ENCODE measurements at regions of chr11 and their contacts with region 1.

Region 1: GRCh38 chr11:134139873-134140331 is 71.0 kb downstream of the JAM3 start:
- DNase-seq: peak in 4 of 5 donors; percentile 60 to 87 (median 78)
- H3K4me3 ChIP-seq: peak overlapping the region in 1 of 3 donors; percentile 37
- H3K27ac ChIP-seq: no peak overlapping the region
- H3K4me1 ChIP-seq: peaks cover 0 to 3% (median 0%) of the 10 kb centered on the region in 3 donors
- H3K27me3 ChIP-seq: no peaks in the 10 kb centered on the region
- CTCF ChIP-seq: peak; percentile 83

Region 2: DNA sequence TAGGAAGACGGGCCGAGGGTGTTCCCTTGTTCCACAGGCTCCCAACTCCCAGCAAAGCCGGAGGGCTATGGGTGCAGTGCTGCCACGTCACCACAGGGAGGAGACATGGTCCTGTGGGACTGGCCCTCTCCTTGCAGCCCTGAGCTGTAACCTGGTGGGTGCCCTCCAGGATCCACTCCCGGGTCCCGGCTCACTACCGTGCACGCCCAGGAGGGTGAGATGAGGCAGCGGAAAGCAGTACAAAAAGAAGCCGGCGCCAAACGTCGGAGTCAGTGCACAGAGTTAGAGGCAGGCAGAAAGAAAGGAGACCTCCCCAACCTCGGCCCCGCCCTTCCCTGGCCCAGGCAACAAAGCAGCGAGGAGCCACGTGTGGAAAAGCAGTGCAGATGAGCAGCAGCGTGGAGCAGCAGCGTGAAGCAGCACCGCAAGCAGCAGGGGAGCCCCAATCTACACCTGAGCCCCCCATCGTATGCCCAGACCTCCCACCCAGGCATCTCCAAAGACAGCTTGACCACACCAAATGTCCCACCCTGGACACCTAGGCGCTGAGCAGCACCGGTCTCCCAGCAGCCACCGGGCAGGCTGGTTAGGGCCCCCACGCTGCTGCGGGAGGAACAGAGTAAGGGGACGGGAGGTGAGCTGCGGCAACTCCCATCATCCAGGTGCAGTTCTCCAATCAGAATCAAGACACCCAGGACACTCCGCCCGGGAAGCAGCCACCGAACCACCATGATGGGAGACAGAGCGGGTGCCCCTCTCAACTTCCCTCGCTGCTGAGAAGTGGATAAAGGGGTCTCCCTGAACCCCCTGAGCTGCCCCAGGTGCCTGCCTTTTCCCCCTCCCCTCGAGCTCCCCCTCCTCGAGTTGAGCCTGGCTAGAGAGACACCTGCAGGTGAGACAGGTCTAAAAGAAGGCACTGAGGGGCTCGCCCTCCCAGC is 211.9 kb before region 1 on chr11:
- intact Hi-C with region 1: loop called (anchors 10 kb)
- DNase-seq: peak in 4 of 5 donors; percentile 66 to 86 (median 76)
- H3K4me3 ChIP-seq: peak overlapping the region in 1 of 3 donors; percentile 32
- H3K27ac ChIP-seq: no peak overlapping the region
- H3K4me1 ChIP-seq: no peaks in the 10 kb centered on the region
- H3K27me3 ChIP-seq: no peaks in the 10 kb centered on the region
- CTCF ChIP-seq: peak; percentile 75

Region 3: DNA sequence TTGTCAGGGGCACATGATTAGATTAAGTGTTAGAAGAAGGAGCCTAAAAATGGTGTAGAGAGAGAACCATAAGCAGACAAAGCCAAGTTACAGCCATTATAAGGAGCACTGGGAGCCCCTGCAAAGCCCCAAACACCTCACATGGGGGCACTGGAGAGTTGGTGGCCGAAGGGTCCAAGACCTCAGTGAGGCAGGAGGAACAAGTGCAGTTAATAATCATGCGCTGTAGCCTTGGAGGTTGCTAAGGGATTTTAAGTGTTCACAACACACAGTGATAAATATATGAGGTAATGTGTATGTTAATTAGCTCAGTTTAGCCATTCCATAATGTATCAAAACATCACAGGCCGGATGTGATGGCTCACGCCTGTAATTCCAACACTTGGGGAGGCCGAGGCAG is 125.4 kb before region 1 on chr11:
- intact Hi-C with region 1: no loop called
- DNase-seq: peak in 3 of 5 donors; percentile 24 to 55 (median 54)
- H3K4me3 ChIP-seq: no peak overlapping the region
- H3K27ac ChIP-seq: no peak overlapping the region
- H3K4me1 ChIP-seq: no peaks in the 10 kb centered on the region
- H3K27me3 ChIP-seq: no peaks in the 10 kb centered on the region
- CTCF ChIP-seq: no peak

Region 4: DNA sequence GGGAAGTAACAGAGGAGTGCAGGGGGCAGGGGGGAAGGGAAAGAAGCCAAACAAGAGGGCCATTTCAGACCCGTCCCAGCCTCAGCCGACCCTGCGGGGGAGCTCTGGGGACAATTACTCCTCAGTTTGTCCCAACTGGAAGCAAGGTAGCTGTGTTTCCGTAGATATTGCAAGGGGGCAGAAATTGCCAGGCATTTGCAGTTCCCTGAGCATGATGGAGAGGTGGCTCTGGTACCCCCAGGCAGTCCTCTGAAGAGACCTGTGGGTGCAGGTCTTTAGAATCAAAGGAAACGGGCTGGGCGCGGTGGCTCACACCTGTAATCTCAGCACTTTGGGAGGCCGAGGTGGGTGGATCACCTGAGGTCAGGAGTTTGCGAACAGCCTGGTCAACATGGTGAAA is 84.9 kb before region 1 on chr11:
- intact Hi-C with region 1: loop called (anchors 5 kb)
- DNase-seq: no peak
- H3K4me3 ChIP-seq: no peak overlapping the region
- H3K27ac ChIP-seq: no peak overlapping the region
- H3K4me1 ChIP-seq: peaks cover 0 to 3% (median 0%) of the 10 kb centered on the region in 3 donors
- H3K27me3 ChIP-seq: no peaks in the 10 kb centered on the region
- CTCF ChIP-seq: no peak